HEK293T (cell line): ENCODE measurements at regions of chr7 and their contacts with region 1.

Region 1: GRCh38 chr7:150339409-150339881 is 2.0 kb downstream of the RARRES2 start:
- DNase-seq: no peak

Region 2: GRCh38 chr7:150356265-150356897 is 16.9 kb after region 1 on chr7:
- CTCF ChIA-PET with region 1: interaction called, 10 read pairs
- POLR2A ChIA-PET with region 1: interaction called, 3 read pairs
- DNase-seq: peak; percentile 65

Region 3: GRCh38 chr7:151226875-151227782 is 887.7 kb after region 1 on chr7 and contains the start of gene ABCF2:
- CTCF ChIA-PET with region 1: no interaction called
- POLR2A ChIA-PET with region 1: no interaction called
- DNase-seq: peak; percentile 100